ENCODE measurements at regions of chr12 and their contacts with region 1.

Region 1: DNA sequence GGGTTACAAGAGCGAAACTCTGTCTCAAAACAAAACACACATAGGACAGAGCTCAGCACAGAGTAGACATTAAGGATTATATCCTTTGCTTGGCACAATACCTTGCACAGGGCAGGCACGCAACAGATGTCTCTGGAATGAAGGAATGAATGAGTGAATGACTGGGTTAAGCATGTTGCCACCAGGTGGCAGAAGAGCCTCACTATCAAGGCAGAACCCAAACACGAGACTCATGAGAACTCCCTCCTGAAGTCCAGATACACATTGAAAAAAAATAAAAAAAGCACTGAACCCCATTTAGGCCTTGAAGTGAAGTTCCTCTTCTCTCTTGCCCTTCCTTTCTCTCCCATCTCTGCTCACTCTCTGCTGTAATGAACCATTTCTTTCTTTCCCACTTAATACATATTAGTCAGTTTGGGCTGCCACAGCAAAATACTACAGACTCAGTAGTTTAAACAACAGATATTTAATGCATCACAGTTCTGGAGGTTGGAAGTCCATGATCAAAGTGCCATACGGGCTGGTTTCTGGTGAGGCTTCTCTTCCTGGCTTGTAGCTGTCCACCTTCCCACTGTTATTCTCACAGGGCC is 26.6 kb upstream of the LTA4H start:
- DNase-seq: peak; percentile 68
- ATAC-seq: peak; percentile 79

Region 2: GRCh38 chr12:95951515-95951914 is 110.4 kb before region 1 on chr12:
- intact Hi-C with region 1: no loop called
- DNase-seq: no peak
- ATAC-seq: no peak

Region 3: GRCh38 chr12:96015672-96016071 is 46.3 kb before region 1 on chr12:
- intact Hi-C with region 1: no loop called
- DNase-seq: no peak
- ATAC-seq: peak; percentile 72

Region 4: DNA sequence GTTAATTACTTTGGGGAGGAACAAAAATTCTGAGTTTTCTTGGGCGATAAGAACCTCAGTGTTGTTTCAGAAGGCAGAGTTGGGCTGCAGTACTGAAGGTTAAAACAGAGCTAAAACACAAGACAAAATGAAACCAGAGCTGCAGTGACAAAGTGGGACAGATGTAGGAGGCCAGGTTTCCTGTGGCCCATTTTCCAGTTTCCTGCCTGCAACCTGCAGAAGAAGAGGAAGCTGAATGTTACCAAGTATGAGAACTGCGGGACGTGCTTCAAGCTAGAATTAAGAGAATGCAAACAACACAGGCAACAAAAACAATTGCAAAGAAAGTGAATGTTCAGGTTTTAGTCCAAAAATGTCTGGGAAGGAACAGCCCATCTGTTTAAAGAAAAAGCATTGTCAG is 150.0 kb after region 1 on chr12:
- intact Hi-C with region 1: loop called (anchors 5 kb)
- DNase-seq: no peak
- ATAC-seq: peak; percentile 21

Region 5: GRCh38 chr12:96399919-96400797 is 338.2 kb after region 1 on chr12 and contains the start of gene CDK17:
- intact Hi-C with region 1: loop called (anchors 5 kb)
- DNase-seq: peak; percentile 92
- ATAC-seq: peak; percentile 91
- total RNA-seq, gene CDK17: 16.6 TPM

Region 6: DNA sequence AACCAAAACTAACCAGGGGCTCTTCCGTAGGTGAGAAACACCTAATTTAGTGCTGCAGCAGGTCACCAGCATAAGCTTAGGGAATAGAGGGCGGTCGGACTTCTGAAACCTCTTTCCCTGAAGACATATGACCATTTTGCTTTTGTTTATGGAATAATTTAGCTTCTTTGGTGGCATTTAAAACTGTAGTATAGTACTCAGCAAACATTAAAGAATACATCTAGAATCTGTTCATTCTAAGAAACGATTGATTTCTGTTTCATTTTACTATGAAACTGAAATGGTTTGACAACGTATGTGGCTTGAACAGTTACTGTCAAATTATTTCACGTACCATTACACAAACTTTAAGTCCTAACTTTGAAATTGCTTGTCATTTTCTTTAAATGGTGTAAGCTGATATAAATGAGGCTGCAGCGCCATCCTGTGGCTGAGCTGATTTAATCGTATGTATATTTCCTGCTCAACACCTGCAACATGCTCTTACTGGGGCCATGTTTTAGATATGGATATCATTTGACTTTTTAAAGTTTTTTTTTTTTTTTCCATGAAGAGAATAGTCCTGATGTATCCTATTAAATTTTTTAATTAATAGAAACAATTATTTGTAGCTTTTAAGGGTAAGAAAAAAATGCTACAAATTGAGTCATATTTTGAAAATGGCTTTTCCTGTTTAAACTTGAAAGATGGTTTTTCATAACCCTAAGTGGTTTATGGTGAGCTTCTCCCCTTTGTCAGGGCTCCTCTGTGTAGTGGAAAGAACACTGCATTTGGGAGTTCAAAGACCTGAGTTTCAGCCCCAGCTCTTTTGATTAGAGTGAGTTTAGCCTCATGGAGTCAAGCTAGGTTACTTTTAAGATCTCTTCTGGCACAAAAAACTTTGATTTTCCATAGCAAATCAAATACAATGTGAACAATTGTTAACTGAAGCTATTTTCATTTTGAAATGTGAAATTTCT is 454.8 kb after region 1 on chr12:
- intact Hi-C with region 1: loop called (anchors 2 kb)
- DNase-seq: peak; percentile 81
- ATAC-seq: peak; percentile 62